ENCODE measurements at regions of chr15 and their contacts with region 1.

Region 1: GRCh38 chr15:38171973-38172372 is 80.7 kb upstream of the SPRED1 start:
- DNase-seq: no peak
- ATAC-seq: no peak
- H3K4me3 ChIP-seq: no peak overlapping the region
- H3K27ac ChIP-seq: no peak overlapping the region
- H3K4me1 ChIP-seq: peaks cover 8% of the 10 kb centered on the region
- H3K27me3 ChIP-seq: no peaks in the 10 kb centered on the region
- CTCF ChIP-seq: no peak

Region 2: GRCh38 chr15:38153781-38154180 is 18.2 kb before region 1 on chr15:
- CTCF ChIA-PET with region 1: no interaction called
- POLR2A ChIA-PET with region 1: interaction called, 11 read pairs
- intact Hi-C with region 1: no loop called
- DNase-seq: no peak
- ATAC-seq: no peak
- H3K4me3 ChIP-seq: no peak overlapping the region
- H3K27ac ChIP-seq: no peak overlapping the region
- H3K4me1 ChIP-seq: no peaks in the 10 kb centered on the region; the same call in 1 of the 2 replicates
- H3K27me3 ChIP-seq: no peaks in the 10 kb centered on the region
- CTCF ChIP-seq: no peak

Region 3: GRCh38 chr15:38217191-38217595 is 45.2 kb after region 1 on chr15:
- CTCF ChIA-PET with region 1: no interaction called
- POLR2A ChIA-PET with region 1: no interaction called
- intact Hi-C with region 1: no loop called
- DNase-seq: peak; percentile 82
- ATAC-seq: peak; percentile 77
- H3K4me3 ChIP-seq: peak overlapping the region; percentile 43; the same call in 1 of the 2 replicates
- H3K27ac ChIP-seq: peak overlapping the region; percentile 95
- H3K4me1 ChIP-seq: peaks cover 47% of the 10 kb centered on the region
- H3K27me3 ChIP-seq: no peaks in the 10 kb centered on the region
- CTCF ChIP-seq: no peak

Region 4: DNA sequence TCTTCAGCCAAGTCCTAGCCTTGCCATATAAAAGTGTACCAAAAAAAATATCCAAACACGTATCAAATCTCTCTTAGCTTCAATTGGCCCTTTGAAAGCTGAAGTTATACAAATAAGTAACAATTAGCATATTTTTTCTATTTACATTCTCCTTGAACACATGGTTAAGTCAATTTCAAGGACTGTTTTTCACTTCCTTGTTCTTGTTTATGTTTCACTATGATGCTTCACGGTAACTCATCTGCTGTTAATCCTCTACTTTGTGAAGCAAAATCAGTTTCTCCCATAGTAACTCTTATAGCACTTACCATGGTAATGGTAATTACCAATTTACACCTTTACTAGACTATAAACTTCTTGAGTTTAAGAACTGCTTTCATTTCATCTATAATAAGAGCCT is 70.1 kb after region 1 on chr15:
- CTCF ChIA-PET with region 1: no interaction called
- POLR2A ChIA-PET with region 1: no interaction called
- intact Hi-C with region 1: no loop called
- DNase-seq: no peak
- ATAC-seq: no peak
- H3K4me3 ChIP-seq: no peak overlapping the region
- H3K27ac ChIP-seq: no peak overlapping the region
- H3K4me1 ChIP-seq: peaks cover 5% of the 10 kb centered on the region
- H3K27me3 ChIP-seq: no peaks in the 10 kb centered on the region
- CTCF ChIP-seq: no peak